Transverse colon (tissue), 4 donors: ENCODE measurements at regions of chr3 and their contacts with region 1.

Region 1: DNA sequence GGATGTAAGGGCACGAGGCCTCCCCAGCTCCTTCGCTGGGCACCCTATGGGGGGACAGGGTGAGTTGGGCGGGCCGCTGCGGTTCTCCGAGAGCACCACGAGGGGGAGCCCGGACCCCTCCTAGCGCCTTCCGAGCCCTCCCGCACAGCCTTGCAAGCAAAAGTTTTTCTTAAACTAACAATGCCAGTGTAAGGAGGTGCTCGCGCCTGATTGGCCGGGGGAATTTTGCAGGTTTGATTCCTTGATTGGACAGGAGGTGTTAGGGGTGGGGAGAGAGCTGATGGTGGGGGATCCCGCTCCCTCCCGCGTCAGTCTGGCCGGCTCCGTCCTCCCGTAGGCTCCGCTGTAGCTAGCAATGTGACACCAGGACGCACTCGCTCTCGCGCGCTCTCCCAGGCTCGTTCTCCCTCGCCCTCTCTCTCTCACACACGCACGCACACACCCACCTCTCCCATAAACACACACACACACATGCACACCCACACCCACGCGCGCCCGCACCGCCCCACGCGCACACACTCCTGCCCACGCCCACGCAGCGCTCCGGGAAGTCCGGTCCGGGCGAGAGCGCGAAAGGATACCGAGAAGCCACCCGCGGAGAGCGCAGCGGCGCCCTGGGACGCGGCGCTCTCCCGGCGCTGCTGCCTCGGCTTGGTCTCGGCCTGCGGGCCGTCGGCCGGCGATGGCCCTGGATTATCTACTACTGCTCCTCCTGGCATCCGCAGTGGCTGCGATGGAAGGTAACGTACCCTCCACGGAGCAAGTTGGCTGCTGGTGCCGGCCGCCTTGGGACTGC is at the start of gene EPHB1:
- DNase-seq: peak; percentile 70
- H3K4me3 ChIP-seq: peak within 1 kb of the TSS; percentile 17 to 54 (median 26)
- H3K27ac ChIP-seq: peak within 1 kb of the TSS in 2 of 4 donors; percentile 28 to 75
- H3K4me1 ChIP-seq: peaks cover 0 to 18% (median 13%) of the 10 kb centered on the region in 4 donors
- H3K27me3 ChIP-seq: peaks cover 32% of the 10 kb centered on the region
- CTCF ChIP-seq: peak; percentile 76 to 86 (median 78)
- EP300 ChIP-seq: no peak
- POLR2A ChIP-seq: no peak
- total RNA-seq, gene EPHB1: 0.82 to 2.2 (median 1.2) TPM

Region 2: DNA sequence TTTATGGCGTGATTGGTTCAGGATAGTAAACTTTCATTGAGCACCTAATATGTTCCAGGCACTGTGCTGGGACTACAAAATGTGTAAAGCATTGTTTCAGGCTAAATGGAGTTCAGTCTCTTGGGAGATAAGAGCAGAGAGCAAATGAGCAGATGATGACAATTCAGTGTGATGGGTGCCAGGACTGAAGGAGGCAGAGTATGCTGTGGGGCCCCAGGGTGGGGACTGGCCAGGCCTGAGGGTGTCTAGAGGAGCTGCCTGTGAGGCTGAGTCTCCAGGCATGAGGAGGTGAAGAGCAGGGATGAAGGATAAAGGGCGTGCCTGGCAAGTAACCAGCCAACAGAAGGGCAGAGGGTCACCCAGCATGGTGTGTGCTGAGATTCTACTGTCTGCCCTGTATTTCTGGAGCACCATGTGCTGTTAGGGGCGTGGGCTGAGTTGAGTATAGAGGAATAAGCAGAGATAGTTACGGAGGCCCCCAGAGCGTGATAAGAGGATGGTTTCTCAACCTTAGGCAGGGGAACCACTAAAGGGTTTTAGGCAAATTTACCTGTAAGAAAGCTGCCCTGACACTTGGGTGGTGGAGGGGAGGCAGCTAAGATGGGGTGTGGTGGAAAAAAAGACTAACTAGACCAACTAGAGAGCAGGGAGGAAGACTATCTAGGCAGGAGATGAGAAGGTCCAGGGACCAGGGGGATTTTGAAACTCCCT is 38.5 kb after region 1 on chr3:
- in situ Hi-C with region 1: no loop called
- intact Hi-C with region 1: no loop called
- DNase-seq: no peak
- H3K4me3 ChIP-seq: no peak overlapping the region
- H3K27ac ChIP-seq: no peak overlapping the region
- H3K4me1 ChIP-seq: no peaks in the 10 kb centered on the region
- H3K27me3 ChIP-seq: no peaks in the 10 kb centered on the region
- CTCF ChIP-seq: no peak
- EP300 ChIP-seq: no peak
- POLR2A ChIP-seq: no peak

Region 3: DNA sequence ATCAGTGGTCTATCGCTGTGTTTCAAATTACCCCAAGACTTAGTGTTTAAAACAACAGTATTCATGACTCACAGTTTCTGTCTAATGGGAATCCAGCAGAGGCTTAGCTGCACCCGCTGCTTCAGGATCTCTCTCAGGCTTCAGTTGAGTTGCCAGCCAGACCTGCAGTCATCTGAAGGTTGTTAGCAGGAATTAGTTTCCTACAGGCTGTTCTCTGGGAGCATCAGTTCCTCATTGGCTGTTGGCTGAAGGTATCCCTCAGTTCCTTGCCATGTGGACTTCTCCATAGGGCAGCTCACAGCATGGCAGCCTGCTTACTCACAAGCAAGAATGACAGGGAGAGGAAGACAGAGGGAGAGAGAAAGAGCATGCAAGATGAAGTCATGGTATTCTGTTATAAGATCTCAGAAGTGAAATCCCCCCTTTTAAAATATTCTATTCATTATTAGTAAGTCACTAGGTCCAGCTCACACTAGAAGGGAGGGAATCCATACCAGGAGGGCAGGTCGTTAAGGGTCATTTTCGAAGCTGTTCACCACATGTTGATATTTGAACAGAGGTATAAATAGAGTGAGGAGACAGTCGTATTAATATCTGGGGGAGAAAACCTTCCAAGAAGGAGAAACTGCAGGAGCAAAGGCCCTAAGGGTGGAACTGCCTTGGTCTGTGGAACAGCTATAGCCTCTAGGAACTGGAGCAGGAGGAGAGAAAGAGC is 696.5 kb after region 1 on chr3:
- in situ Hi-C with region 1: loop called in 1 of 4 experiments (anchors 25 kb)
- intact Hi-C with region 1: no loop called
- DNase-seq: no peak
- H3K4me3 ChIP-seq: no peak overlapping the region
- H3K27ac ChIP-seq: no peak overlapping the region
- H3K4me1 ChIP-seq: no peaks in the 10 kb centered on the region
- H3K27me3 ChIP-seq: no peaks in the 10 kb centered on the region
- CTCF ChIP-seq: no peak
- EP300 ChIP-seq: no peak
- POLR2A ChIP-seq: no peak

Region 4: DNA sequence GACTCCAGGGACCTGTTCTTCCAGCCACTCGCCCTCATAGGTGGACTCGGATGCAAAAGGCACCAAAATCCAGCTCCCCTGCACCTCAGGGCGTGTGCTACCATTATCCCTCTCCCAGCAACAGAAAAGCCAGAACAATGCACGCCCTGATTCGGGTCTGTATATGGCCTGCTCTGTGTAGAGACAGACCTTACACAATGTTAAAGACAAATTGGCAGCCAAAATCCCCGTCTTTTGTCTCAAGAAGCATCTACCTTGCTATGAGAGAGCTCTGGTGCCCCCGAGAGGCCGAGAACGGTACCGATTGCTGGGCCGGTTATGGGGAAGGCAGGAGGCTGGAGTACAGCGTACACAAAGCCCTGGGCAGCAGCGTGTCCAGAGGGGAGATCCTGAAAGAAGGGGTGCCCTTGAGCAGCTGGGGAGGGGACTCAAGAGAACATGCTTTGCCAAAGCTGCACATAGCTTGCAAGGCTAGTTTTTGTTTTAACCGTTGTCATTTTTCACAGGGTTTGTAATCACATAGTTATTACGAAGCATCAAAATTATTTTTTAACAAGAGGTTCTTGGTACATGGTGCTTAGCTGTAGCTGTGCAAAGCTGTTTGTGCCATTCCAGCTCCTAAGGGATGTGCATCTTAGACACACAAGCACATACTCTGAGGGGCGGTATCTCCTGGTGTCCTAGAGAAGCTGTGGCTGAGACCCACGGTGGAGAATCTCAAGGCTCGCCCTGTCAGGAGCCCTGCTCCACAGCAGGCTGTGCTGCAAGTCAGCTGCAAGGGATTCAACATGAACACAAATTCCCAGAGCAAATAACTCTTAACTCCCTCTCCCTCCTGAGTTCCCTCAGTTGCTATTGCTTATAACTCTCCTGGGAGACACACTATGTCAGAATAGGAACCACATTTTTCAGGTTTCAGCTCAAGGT is 708.9 kb after region 1 on chr3:
- in situ Hi-C with region 1: loop called (anchors 25 kb)
- intact Hi-C with region 1: loop called (anchors 10 kb)
- DNase-seq: peak; percentile 45
- H3K4me3 ChIP-seq: no peak overlapping the region
- H3K27ac ChIP-seq: no peak overlapping the region
- H3K4me1 ChIP-seq: no peaks in the 10 kb centered on the region
- H3K27me3 ChIP-seq: peaks cover 4% of the 10 kb centered on the region
- CTCF ChIP-seq: peak; percentile 25 to 51 (median 43)
- EP300 ChIP-seq: no peak
- POLR2A ChIP-seq: no peak